ENCODE measurements at regions of chr17 and their contacts with region 1.

Region 1: DNA sequence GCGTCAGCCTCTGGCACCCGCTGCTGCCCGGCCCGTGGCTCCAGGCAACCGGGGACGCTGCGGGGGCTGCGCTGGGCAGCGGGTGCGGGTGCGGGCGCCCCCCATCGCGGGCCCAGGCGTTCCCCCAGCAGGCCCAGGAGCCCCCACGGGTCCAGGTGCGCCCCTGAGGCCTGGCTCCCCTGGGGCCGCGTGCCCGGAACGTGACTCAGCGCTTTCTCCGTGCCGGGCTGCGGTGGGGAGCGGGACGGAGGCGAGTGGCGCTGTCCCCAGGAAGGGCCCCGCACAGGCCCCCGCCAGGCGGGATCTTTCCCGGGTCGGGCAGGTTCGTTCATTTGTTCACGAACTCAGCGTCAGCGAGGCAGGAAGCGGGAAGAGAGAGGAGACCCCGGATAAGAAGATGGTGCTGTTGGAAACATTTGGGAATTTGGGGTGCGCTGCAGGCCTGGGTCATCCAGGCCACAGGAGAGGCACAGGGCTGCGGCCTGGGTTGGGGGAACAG is 18.4 kb upstream of the EXOC7 start:
- DNase-seq: no peak
- ATAC-seq: peak; percentile 18
- H3K4me3 Mint-ChIP-seq: peak overlapping the region; percentile 64
- H3K27ac Mint-ChIP-seq: peak overlapping the region; percentile 86
- H3K4me1 Mint-ChIP-seq: peaks cover 27% of the 10 kb centered on the region
- H3K27me3 Mint-ChIP-seq: no peaks in the 10 kb centered on the region

Region 2: DNA sequence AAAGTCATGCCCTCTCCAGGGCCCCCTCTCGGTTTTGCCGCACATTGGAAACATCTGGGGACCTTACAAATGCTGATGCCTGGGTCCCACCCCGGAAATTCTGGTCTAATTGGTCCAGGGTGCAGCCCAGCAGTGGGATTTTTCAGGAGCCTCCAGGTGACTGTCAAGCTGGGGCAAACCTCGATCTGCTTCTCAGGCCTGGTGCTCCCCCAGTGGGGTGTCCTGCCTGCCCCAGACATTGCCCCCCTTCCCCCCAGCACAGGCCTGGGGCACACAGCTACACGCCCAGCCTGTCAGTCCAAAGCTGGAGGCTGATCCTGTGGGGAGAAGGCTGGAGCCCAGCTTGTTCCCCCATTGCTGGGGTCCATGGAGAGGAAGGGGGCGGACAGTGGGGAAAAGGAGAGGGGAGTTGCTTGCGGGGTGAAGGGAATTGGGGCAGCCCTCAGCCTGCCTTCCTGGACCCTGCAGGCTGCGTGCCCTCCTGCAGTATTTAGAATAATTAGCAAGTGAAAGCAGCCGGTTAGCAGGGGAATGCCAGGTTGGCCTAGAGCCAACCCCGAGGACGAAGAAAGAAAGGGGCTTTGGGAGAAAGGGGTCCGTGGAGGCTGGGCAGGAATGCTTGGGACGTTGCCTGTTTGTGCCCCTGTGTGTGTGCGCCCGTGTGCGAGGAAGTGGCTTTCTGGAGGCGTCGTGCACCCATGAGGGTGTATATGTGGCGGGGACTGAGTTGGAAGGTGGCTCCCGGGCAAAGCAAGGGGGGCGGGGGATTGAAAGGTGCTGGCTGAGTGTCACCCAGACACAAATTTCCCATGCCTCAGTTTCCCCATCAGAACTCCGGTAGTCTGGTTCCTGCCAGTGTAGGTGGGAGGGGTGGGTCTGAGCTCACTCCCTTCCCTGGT is 13.2 kb after region 1 on chr17:
- POLR2A ChIA-PET with region 1: interaction called, 50 read pairs
- DNase-seq: no peak
- ATAC-seq: peak; percentile 38
- H3K4me3 Mint-ChIP-seq: peak overlapping the region; percentile 59
- H3K27ac Mint-ChIP-seq: peak overlapping the region; percentile 93
- H3K4me1 Mint-ChIP-seq: peaks cover 23% of the 10 kb centered on the region
- H3K27me3 Mint-ChIP-seq: peaks cover 3% of the 10 kb centered on the region

Region 3: DNA sequence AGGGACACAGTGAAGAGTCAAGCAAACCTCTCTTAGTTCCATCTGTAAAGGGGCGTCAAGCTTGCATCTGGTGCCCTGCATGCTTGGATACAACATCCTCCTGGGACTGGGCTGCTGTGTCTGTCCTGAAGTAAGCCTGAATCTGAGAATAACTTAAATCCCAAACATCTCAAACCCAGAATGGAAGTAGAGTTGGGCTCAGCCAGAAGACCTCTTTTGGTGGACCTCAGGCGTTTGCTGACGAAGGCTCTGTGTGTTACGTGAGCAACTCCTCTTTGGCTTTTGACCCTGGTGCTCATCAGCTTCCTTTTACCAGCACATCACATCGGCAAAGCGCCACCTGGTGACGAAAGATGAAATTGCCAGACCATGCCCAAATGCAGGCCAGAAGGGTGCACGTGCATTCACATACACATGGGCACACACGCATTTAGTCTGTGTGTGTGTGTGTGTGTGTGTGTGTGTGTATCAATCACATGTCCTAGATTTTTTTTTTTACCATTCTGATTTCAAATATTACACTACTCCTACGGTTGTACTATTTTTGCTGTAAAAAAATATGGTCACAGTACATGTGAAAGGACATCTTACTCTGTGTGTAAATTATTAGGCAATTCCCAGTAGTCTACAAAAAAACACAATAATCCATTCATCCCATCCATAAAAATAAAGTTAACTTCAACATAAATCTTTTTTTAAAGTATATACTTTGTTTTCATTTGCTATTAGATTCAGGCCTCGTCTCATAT is 60.2 kb after region 1 on chr17:
- POLR2A ChIA-PET with region 1: interaction called, 35 read pairs
- DNase-seq: peak; percentile 92
- ATAC-seq: peak; percentile 69
- H3K4me3 Mint-ChIP-seq: peak overlapping the region; percentile 56
- H3K27ac Mint-ChIP-seq: peak overlapping the region; percentile 94
- H3K4me1 Mint-ChIP-seq: peaks cover 50% of the 10 kb centered on the region
- H3K27me3 Mint-ChIP-seq: no peaks in the 10 kb centered on the region

Region 4: GRCh38 chr17:76264755-76265596 is 143.0 kb after region 1 on chr17 and contains the start of gene UBALD2:
- POLR2A ChIA-PET with region 1: interaction called, 244 read pairs
- DNase-seq: peak; percentile 99
- ATAC-seq: peak; percentile 81
- H3K4me3 Mint-ChIP-seq: peak within 1 kb of the TSS; percentile 88
- H3K27ac Mint-ChIP-seq: peak within 1 kb of the TSS; percentile 96
- H3K4me1 Mint-ChIP-seq: peaks cover 51% of the 10 kb centered on the region
- H3K27me3 Mint-ChIP-seq: no peaks in the 10 kb centered on the region
- total RNA-seq, gene UBALD2: 344 to 375 TPM

Region 5: GRCh38 chr17:76278952-76279741 is 157.2 kb after region 1 on chr17:
- POLR2A ChIA-PET with region 1: interaction called, 244 read pairs
- DNase-seq: peak; percentile 92
- ATAC-seq: peak; percentile 77
- H3K4me3 Mint-ChIP-seq: no peak overlapping the region
- H3K27ac Mint-ChIP-seq: peak overlapping the region; percentile 45
- H3K4me1 Mint-ChIP-seq: peaks cover 15% of the 10 kb centered on the region
- H3K27me3 Mint-ChIP-seq: no peaks in the 10 kb centered on the region